ENCODE measurements at regions of chr6 and their contacts with region 1.

Region 1: GRCh38 chr6:43120944-43121913 is 45.1 kb downstream of the PTK7 start:
- DNase-seq: peak; percentile 73 to 92 (median 83)
- H3K4me3 ChIP-seq: no peak overlapping the region
- H3K27ac ChIP-seq: peak overlapping the region in 1 of 2 donors; percentile 55
- H3K4me1 ChIP-seq: peaks cover 38% of the 10 kb centered on the region
- H3K27me3 ChIP-seq: no peaks in the 10 kb centered on the region
- CTCF ChIP-seq: no peak
- EP300 ChIP-seq: peak; percentile 58
- POLR2A ChIP-seq: no peak

Region 2: GRCh38 chr6:42175860-42176259 is 945.4 kb before region 1 on chr6:
- intact Hi-C with region 1: no loop called
- DNase-seq: no peak
- H3K4me3 ChIP-seq: no peak overlapping the region
- H3K27ac ChIP-seq: no peak overlapping the region
- H3K4me1 ChIP-seq: no peaks in the 10 kb centered on the region
- H3K27me3 ChIP-seq: no peaks in the 10 kb centered on the region
- CTCF ChIP-seq: no peak
- EP300 ChIP-seq: no peak
- POLR2A ChIP-seq: no peak

Region 3: DNA sequence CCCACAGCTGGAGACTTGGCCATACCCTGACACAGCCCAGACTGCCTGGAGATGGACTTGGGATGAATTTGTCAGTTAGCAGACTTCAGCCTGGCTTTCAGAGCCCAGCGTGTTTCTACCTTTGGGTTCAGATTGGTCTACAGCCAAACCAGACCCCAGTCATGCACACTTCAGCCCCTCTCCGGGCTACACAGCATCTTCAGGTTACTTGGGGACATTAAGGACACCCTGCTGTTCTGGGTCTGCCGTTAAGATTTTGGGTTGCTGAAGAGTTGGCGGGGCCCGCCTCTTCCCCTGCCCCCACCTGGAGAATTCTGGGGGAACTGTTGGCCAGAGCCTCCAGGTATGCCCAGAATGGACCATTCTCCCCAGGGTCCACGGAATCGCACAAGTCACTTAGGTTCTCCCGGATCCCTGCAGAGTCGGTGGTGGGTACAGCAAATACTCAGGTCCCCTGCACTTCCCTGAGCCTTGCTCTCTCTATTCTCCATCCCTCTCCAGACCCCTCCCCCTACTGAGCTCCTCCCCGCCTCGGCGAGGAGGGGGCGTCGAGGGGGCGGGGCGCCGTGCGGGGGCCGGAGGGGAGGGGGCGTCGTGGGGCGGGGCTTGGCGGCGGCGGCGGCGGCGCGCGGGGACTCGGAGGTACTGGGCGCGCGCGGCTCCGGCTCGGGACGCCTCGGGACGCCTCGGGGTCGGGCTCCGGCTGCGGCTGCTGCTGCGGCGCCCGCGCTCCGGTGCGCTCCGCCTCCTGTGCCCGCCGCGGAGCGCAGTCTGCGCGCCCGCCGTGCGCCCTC is 45.4 kb before region 1 on chr6 and contains the start of gene PTK7:
- intact Hi-C with region 1: loop called in 2 of 4 experiments (anchors 5 to 10 kb)
- DNase-seq: peak; percentile 71 to 87 (median 85)
- H3K4me3 ChIP-seq: peak within 1 kb of the TSS; percentile 68
- H3K27ac ChIP-seq: peak within 1 kb of the TSS; percentile 49 to 66
- H3K4me1 ChIP-seq: peaks cover 15% of the 10 kb centered on the region
- H3K27me3 ChIP-seq: no peaks in the 10 kb centered on the region
- CTCF ChIP-seq: no peak
- EP300 ChIP-seq: no peak
- POLR2A ChIP-seq: no peak
- total RNA-seq, gene PTK7: 65.7 to 167 (median 105) TPM

Measured in ovary (tissue), 10 donors.